AG04450 (cell line): ENCODE measurements at regions of chr12 and their contacts with region 1.

Region 1: GRCh38 chr12:92145731-92146496 is at the start of gene BTG1:
- DNase-seq: peak; percentile 100
- H3K4me3 ChIP-seq: peak within 1 kb of the TSS; percentile 98
- H3K27ac ChIP-seq: peak within 1 kb of the TSS; percentile 95
- H3K27me3 ChIP-seq: no peaks in the 10 kb centered on the region
- CTCF ChIP-seq: no peak
- polyA plus RNA-seq, gene BTG1: 88.8 and 89.7 TPM in 2 replicates

Region 2: DNA sequence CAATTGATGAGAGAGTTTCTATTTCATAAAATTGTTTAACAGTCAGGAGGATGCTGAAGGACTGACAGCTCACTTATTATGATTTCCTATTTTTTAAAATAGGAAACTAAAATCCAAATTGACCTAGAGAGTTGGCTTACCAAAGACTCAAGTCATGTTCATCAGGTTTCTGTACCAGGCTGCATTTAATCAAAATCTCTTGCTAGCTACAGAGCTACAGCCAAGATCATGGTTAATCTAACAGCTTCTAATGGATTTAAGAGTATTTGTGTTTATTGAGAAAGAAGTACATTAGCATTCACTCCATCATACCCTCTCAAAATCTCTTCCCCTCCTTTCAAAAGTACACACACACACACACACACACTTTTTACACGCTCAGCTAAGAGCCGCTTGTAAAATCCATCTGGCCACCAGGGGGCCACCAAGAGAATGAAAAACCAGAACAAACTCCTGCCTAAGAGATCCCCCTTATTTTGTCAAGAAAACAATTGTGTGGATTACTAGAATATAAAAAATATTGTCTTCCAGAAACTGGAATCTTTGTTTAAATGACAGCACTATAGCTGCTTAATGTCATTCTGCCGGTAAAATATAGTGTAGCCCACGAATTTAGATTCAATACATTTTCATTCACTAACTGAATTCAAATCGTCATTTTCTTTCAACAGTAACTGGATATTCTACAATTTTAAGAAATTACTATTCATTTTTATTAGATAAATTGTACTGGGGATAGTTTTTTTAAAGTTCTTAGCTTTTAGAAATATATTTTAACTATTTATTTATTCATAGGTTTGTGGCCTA is 334.2 kb before region 1 on chr12:
- CTCF ChIA-PET with region 1: interaction called, 55 read pairs
- POLR2A ChIA-PET with region 1: interaction called, 23 read pairs
- DNase-seq: peak; percentile 21
- H3K4me3 ChIP-seq: no peak overlapping the region
- H3K27ac ChIP-seq: no peak overlapping the region
- H3K27me3 ChIP-seq: no peaks in the 10 kb centered on the region
- CTCF ChIP-seq: peak; percentile 88

Region 3: DNA sequence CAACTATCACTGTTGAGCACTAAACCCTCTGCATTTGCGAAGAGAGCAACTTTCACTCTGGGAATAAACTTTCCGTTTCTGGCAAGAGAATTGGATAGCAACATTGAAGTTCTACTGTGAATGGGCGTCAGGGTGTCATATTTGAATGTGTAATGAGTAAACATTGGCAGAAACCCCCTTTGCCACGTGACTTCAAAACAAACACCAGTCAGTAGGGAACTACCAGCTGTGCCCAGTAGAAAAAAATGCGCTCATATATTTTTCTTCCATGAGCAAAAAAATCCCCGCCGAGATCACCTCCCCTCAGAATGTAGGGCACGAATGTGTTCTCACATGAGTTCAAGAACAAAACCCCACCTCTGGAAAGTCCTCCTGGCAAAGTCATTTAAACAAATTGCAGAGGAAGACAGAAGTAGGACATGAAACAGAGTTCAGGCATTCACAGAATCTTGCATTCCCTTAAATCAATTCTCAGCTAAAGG is 80.9 kb before region 1 on chr12:
- CTCF ChIA-PET with region 1: interaction called, 3 read pairs
- POLR2A ChIA-PET with region 1: interaction called, 21 read pairs
- DNase-seq: no peak
- H3K4me3 ChIP-seq: no peak overlapping the region
- H3K27ac ChIP-seq: no peak overlapping the region
- H3K27me3 ChIP-seq: no peaks in the 10 kb centered on the region
- CTCF ChIP-seq: no peak

Region 4: DNA sequence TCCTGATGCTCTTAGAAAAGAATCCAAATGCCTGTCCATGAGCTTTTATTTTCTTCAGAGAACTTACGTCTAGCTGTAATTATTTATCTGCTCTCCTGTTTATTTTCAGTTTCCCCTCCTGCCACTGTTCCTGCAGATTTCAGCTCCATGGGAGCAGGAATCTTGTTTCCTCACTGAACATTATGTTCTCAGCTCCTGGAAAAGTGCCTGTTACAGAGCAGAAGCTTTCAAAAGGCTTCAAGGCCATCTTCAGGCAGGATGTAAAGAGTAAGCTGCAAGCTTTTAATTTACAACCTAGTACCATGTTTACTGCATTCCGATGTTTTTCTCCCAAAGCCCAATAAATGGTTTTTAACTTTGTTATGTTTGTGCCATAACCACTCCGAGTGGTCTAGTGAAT is 98.1 kb after region 1 on chr12:
- CTCF ChIA-PET with region 1: no interaction called
- POLR2A ChIA-PET with region 1: interaction called, 21 read pairs
- DNase-seq: no peak
- H3K4me3 ChIP-seq: no peak overlapping the region
- H3K27ac ChIP-seq: no peak overlapping the region
- H3K27me3 ChIP-seq: no peaks in the 10 kb centered on the region
- CTCF ChIP-seq: no peak

Region 5: GRCh38 chr12:92408072-92408900 is 262.4 kb after region 1 on chr12:
- CTCF ChIA-PET with region 1: interaction called, 4 read pairs
- POLR2A ChIA-PET with region 1: interaction called, 10 read pairs
- DNase-seq: no peak
- H3K4me3 ChIP-seq: no peak overlapping the region
- H3K27ac ChIP-seq: no peak overlapping the region
- H3K27me3 ChIP-seq: peaks cover 3% of the 10 kb centered on the region
- CTCF ChIP-seq: peak; percentile 63

Region 6: DNA sequence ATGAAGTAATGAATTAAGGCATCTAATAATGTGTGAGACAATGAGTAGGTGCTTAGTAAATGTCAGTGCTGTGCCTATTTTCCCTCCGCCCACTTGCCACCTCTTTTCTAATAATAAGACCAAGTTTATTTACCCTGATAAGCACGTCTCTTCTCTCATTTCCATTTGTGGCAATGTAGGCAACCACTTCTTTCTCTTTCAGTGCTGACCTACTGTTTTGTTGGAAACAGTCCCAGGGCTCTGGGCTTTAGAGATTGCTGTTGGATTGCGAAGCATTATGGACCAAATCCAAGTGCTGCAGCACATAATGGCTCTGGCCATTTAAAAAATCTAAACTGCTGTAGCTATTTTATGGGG is 415.6 kb after region 1 on chr12:
- CTCF ChIA-PET with region 1: no interaction called
- POLR2A ChIA-PET with region 1: interaction called, 13 read pairs
- DNase-seq: peak; percentile 79
- H3K4me3 ChIP-seq: no peak overlapping the region
- H3K27ac ChIP-seq: no peak overlapping the region
- H3K27me3 ChIP-seq: no peaks in the 10 kb centered on the region
- CTCF ChIP-seq: no peak

Region 7: DNA sequence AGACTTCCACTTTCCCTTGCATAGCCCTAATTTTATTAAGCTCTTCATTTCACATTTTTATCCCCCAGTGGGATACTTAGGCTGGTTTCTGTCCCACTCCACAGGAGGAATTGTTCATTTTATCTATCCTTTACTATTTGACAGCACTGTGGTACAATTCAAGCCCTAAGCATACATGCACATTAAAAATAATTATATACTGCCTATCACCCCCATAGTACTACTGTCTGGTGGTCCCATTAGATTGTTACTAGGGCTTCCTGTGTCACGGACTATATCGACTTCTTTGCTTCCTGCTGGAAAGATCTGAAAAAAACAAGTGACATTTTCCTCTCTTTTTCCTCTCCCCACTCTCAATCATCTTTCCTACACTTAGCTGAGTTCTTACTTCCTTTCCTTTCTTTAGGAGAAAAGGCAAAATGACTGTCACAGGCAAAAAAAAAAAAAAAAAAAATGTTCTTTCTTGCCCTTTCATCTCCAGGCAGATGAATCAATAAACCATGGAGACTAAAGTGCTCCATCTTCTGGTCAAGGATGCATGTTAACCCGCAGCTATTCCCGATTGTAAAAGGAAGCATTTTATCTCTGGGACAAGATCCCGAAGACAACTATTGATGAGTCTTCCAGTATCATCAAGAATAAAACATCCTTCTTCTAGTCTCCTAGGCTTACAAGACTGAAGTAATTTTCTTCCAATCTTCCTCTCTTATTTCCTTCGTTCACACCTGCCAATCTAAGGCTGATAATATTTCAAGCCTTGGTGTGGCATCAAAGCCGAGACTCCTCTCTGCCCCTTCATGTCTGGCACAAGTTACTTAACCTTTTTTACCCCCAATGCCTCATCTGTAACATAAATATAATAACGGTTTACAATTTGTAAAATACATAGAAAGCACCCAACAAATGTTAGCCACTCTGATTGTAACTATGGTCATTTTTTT is 462.5 kb after region 1 on chr12:
- CTCF ChIA-PET with region 1: interaction called, 6 read pairs
- POLR2A ChIA-PET with region 1: interaction called, 12 read pairs
- DNase-seq: no peak
- H3K4me3 ChIP-seq: no peak overlapping the region
- H3K27ac ChIP-seq: no peak overlapping the region
- H3K27me3 ChIP-seq: no peaks in the 10 kb centered on the region
- CTCF ChIP-seq: peak; percentile 72